CD8-positive, alpha-beta memory T cell (primary cell): ENCODE measurements at regions of chr3 and their contacts with region 1.

Region 1: DNA sequence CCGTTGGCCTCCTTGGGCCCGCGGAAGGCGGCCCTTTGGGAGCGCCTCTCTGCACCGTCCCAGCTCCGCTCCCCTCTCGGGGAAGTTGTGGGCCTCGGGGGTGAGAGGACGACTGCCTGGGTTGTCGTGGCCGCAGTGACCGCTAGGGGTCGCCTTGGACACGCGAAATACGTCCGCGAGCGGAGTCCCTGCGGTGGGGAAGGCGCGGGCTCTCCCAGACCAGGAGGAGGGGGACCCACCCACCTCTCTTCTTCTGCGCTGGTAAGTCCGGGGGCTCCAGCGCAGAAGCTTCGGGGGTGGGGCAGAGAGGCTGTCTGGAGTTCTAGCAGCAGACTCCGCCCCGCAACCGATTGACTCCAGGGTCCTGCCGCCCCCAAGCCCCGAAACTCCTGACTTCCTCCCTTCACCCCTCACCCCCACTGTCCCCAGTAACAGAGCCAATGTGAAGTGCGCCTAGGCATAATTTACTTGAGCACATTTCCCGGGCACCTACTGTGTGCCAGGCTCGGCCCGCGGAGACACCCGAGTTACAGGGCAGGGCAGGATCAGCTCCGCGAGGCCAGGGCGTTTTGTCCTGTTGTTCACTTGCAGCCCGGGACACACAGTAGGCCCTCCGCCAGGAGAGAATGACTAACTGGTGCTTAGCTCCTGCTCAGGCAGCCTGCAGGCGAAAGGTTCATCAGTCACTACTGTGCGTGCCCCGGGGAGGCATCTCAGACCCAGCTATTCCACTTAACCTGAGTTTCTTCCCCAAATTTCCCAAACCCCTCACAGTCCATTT is 32.8 kb downstream of the DNASE1L3 start:
- DNase-seq: peak; percentile 72 to 89 (median 84)
- H3K4me3 ChIP-seq: peak overlapping the region; percentile 55
- H3K4me3 Mint-ChIP-seq: peak overlapping the region; percentile 61 to 89 (median 71)
- H3K27ac ChIP-seq: no peak overlapping the region
- H3K27ac Mint-ChIP-seq: peak overlapping the region in 2 of 8 donors; percentile 33 to 48
- H3K4me1 ChIP-seq: peaks cover 10% of the 10 kb centered on the region
- H3K4me1 Mint-ChIP-seq: peaks cover 7 to 18% (median 10%) of the 10 kb centered on the region in 3 donors
- H3K27me3 ChIP-seq: no peaks in the 10 kb centered on the region
- H3K27me3 Mint-ChIP-seq: peaks cover 0 to 5% of the 10 kb centered on the region in 2 donors

Region 2: GRCh38 chr3:57673156-57673555 is 504.8 kb before region 1 on chr3:
- CTCF ChIA-PET with region 1: no interaction called
- POLR2A ChIA-PET with region 1: no interaction called
- DNase-seq: no peak
- H3K4me3 ChIP-seq: no peak overlapping the region
- H3K4me3 Mint-ChIP-seq: peak overlapping the region in 1 of 7 donors; percentile 28
- H3K27ac ChIP-seq: no peak overlapping the region
- H3K27ac Mint-ChIP-seq: peak overlapping the region in 5 of 8 donors; percentile 3 to 77 (median 38)
- H3K4me1 ChIP-seq: peaks cover 4% of the 10 kb centered on the region
- H3K4me1 Mint-ChIP-seq: peaks cover 47 to 65% (median 61%) of the 10 kb centered on the region in 3 donors
- H3K27me3 ChIP-seq: no peaks in the 10 kb centered on the region
- H3K27me3 Mint-ChIP-seq: no peaks in the 10 kb centered on the region

Region 3: GRCh38 chr3:58008140-58009025 is 169.6 kb before region 1 on chr3 and contains the start of gene FLNB:
- CTCF ChIA-PET with region 1: interaction called, 16 read pairs
- POLR2A ChIA-PET with region 1: no interaction called
- DNase-seq: peak; percentile 68 to 82 (median 73)
- H3K4me3 ChIP-seq: peak within 1 kb of the TSS; percentile 99
- H3K4me3 Mint-ChIP-seq: peak within 1 kb of the TSS; percentile 73 to 93 (median 90)
- H3K27ac ChIP-seq: peak within 1 kb of the TSS; percentile 73
- H3K27ac Mint-ChIP-seq: peak within 1 kb of the TSS; percentile 17 to 92 (median 74)
- H3K4me1 ChIP-seq: peaks cover 29% of the 10 kb centered on the region
- H3K4me1 Mint-ChIP-seq: peaks cover 27 to 45% (median 30%) of the 10 kb centered on the region in 3 donors
- H3K27me3 ChIP-seq: no peaks in the 10 kb centered on the region
- H3K27me3 Mint-ChIP-seq: no peaks in the 10 kb centered on the region
- total RNA-seq, gene FLNB: 11.5 to 12.8 TPM

Region 4: GRCh38 chr3:58167431-58168351 is 10.2 kb before region 1 on chr3:
- CTCF ChIA-PET with region 1: interaction called, 31 read pairs
- POLR2A ChIA-PET with region 1: no interaction called
- DNase-seq: peak in 4 of 5 donors; percentile 13 to 48 (median 29)
- H3K4me3 ChIP-seq: no peak overlapping the region
- H3K4me3 Mint-ChIP-seq: peak overlapping the region in 1 of 7 donors; percentile 36
- H3K27ac ChIP-seq: no peak overlapping the region
- H3K27ac Mint-ChIP-seq: peak overlapping the region in 2 of 8 donors; percentile 24 to 39
- H3K4me1 ChIP-seq: no peaks in the 10 kb centered on the region
- H3K4me1 Mint-ChIP-seq: no peaks in the 10 kb centered on the region
- H3K27me3 ChIP-seq: no peaks in the 10 kb centered on the region
- H3K27me3 Mint-ChIP-seq: no peaks in the 10 kb centered on the region

Region 5: GRCh38 chr3:58188173-58188564 is 10.2 kb after region 1 on chr3:
- CTCF ChIA-PET with region 1: interaction called, 23 read pairs
- POLR2A ChIA-PET with region 1: no interaction called
- DNase-seq: no peak
- H3K4me3 ChIP-seq: no peak overlapping the region
- H3K4me3 Mint-ChIP-seq: no peak overlapping the region
- H3K27ac ChIP-seq: no peak overlapping the region
- H3K27ac Mint-ChIP-seq: no peak overlapping the region
- H3K4me1 ChIP-seq: no peaks in the 10 kb centered on the region
- H3K4me1 Mint-ChIP-seq: peaks cover 0 to 3% (median 0%) of the 10 kb centered on the region in 3 donors
- H3K27me3 ChIP-seq: no peaks in the 10 kb centered on the region
- H3K27me3 Mint-ChIP-seq: no peaks in the 10 kb centered on the region

Region 6: GRCh38 chr3:58433400-58434169 is 255.6 kb after region 1 on chr3 and contains the start of gene PDHB:
- CTCF ChIA-PET with region 1: no interaction called
- POLR2A ChIA-PET with region 1: no interaction called
- DNase-seq: peak; percentile 83 to 92 (median 88)
- H3K4me3 ChIP-seq: peak within 1 kb of the TSS; percentile 80
- H3K4me3 Mint-ChIP-seq: peak within 1 kb of the TSS; percentile 91 to 98 (median 93)
- H3K27ac ChIP-seq: peak within 1 kb of the TSS; percentile 82
- H3K27ac Mint-ChIP-seq: peak within 1 kb of the TSS; percentile 92 to 98 (median 94)
- H3K4me1 ChIP-seq: peaks cover 20% of the 10 kb centered on the region
- H3K4me1 Mint-ChIP-seq: peaks cover 15 to 33% (median 26%) of the 10 kb centered on the region in 3 donors
- H3K27me3 ChIP-seq: no peaks in the 10 kb centered on the region
- H3K27me3 Mint-ChIP-seq: peaks cover 0 to 2% of the 10 kb centered on the region in 2 donors
- total RNA-seq, gene PDHB: 64.2 to 64.8 TPM